Endothelial cell of umbilical vein (primary cell): ENCODE measurements at regions of chr1 and their contacts with region 1.

Region 1: DNA sequence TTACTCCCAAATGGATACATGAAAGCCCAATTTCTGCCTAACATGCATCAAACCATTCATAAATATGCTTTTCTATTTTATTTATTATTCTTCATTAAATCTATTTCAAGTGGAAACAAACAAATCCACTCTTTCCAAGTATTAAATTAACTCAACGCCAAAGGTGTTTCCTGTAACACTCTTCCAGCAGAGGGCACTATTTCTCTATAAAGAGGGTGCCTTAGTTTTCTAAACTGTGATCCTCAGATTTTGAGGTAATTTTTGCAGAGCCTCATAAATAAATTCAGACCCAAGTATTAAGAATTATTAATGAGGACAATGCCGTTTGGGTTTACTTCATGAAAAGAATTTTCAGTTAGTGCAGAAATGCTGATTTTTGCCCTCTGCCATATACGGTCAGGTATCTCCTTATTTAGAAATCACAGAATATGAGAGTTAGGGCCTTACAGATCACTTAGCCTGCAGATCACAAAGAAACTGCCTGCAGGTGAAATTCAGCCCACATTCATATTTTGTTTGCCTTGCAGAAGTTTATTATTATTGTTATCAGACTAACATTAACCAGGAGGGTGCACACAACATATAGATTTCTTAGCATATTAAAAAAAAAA is 40.1 kb upstream of the MYSM1 start:
- DNase-seq: peak; percentile 73
- H3K4me3 ChIP-seq: no peak overlapping the region
- H3K27ac ChIP-seq: no peak overlapping the region
- H3K4me1 ChIP-seq: peaks cover 3% of the 10 kb centered on the region
- H3K27me3 ChIP-seq: no peaks in the 10 kb centered on the region
- CTCF ChIP-seq: peak; percentile 31 to 38
- POLR2A ChIP-seq: no peak

Region 2: DNA sequence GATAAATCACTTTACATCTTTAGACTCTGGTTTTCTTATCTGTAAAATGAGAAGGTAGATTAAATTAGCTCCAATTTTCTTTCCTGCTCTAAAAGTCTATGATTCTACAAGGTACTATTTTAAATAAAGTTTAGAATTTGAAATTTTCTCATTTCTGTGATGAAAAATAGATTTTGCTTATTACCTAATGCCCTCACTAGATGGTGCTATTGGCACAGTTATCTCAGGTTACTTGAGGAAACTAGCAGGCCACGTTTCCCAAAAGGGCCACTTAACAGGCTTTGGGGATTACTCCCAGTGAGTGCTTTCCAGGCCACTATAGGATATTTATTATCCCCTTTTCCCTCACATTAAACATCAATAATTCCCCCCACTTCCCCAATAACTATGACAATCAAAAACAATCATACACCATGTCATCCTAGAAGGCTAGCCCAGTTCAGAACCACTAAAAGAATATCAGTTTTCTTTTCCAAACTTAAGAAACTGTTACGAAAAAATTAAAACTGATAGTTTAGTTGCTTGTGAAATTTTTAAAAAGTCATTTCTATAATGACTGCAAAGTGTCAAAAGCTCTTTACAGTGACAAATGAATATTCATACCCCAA is 224.1 kb before region 1 on chr1:
- CTCF ChIA-PET with region 1: interaction called, 3 read pairs
- POLR2A ChIA-PET with region 1: no interaction called
- dilution Hi-C with region 1: no loop called
- intact Hi-C with region 1: loop called (anchors 2 kb)
- DNase-seq: peak; percentile 71
- H3K4me3 ChIP-seq: no peak overlapping the region
- H3K27ac ChIP-seq: no peak overlapping the region
- H3K4me1 ChIP-seq: no peaks in the 10 kb centered on the region
- H3K27me3 ChIP-seq: no peaks in the 10 kb centered on the region
- CTCF ChIP-seq: peak; percentile 37 to 58
- POLR2A ChIP-seq: no peak

Region 3: DNA sequence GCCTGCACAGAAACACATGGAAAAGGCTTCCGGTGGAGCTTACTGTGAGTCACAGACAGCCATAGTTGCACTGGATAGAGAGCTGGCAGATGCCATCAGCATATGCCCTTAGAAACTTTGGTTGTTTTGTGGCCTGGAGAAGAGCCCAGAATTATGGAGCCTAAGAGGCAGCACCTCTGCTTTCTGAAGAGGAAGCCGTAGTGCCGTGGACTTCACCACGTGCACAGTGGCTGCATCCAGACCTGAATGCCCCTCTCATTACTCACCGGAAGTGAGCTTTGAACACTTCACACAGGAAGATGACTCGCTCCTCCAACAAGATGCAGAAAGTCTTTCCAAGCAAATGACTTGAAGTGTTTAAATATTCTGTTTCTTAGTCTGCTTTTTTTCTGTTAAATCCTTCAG is 15.5 kb after region 1 on chr1:
- CTCF ChIA-PET with region 1: interaction called, 11 read pairs
- POLR2A ChIA-PET with region 1: no interaction called
- dilution Hi-C with region 1: no loop called
- intact Hi-C with region 1: no loop called
- DNase-seq: peak; percentile 99
- H3K4me3 ChIP-seq: peak overlapping the region in 1 of 3 experiments; percentile 18
- H3K27ac ChIP-seq: peak overlapping the region; percentile 96
- H3K4me1 ChIP-seq: peaks cover 40% of the 10 kb centered on the region
- H3K27me3 ChIP-seq: no peaks in the 10 kb centered on the region
- CTCF ChIP-seq: no peak
- POLR2A ChIP-seq: no peak

Region 4: GRCh38 chr1:58848818-58849411 is 109.0 kb after region 1 on chr1:
- CTCF ChIA-PET with region 1: no interaction called
- POLR2A ChIA-PET with region 1: no interaction called
- dilution Hi-C with region 1: no loop called
- intact Hi-C with region 1: loop called (anchors 1 kb)
- DNase-seq: peak; percentile 95
- H3K4me3 ChIP-seq: no peak overlapping the region
- H3K27ac ChIP-seq: peak overlapping the region; percentile 95
- H3K4me1 ChIP-seq: peaks cover 30% of the 10 kb centered on the region
- H3K27me3 ChIP-seq: no peaks in the 10 kb centered on the region
- CTCF ChIP-seq: peak; percentile 8 to 24
- POLR2A ChIP-seq: no peak

Region 5: GRCh38 chr1:59076612-59077011 is 336.7 kb after region 1 on chr1:
- CTCF ChIA-PET with region 1: interaction called, 4 read pairs
- POLR2A ChIA-PET with region 1: no interaction called
- dilution Hi-C with region 1: no loop called
- intact Hi-C with region 1: loop called (anchors 2 kb)
- DNase-seq: peak; percentile 60
- H3K4me3 ChIP-seq: no peak overlapping the region
- H3K27ac ChIP-seq: no peak overlapping the region
- H3K4me1 ChIP-seq: peaks cover 13% of the 10 kb centered on the region
- H3K27me3 ChIP-seq: no peaks in the 10 kb centered on the region
- CTCF ChIP-seq: peak in 1 of 2 donors; percentile 16
- POLR2A ChIP-seq: no peak

Region 6: DNA sequence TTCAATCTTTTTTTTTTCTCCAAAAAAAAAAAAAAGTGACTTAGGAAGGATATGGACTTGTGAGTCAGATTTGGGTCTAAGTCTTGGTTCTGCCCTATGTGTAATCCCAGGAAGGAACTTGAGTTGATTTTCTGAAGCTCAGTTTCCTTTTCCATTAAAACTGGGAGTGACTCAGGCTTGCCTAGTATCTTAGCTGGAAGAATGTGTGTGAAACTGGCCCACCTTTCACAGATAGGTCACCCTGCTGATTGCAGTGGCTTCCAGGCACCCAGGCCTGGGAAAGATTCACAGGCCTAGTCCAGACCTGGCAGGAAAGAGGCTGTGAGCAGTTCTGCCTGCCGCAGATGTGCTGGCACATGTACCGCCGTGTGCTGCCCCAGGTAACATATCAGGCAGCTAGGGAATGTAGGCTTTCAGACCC is 856.5 kb after region 1 on chr1:
- CTCF ChIA-PET with region 1: no interaction called
- POLR2A ChIA-PET with region 1: no interaction called
- dilution Hi-C with region 1: no loop called
- intact Hi-C with region 1: no loop called
- DNase-seq: peak; percentile 98
- H3K4me3 ChIP-seq: no peak overlapping the region
- H3K27ac ChIP-seq: peak overlapping the region; percentile 83
- H3K4me1 ChIP-seq: peaks cover 29% of the 10 kb centered on the region
- H3K27me3 ChIP-seq: no peaks in the 10 kb centered on the region
- CTCF ChIP-seq: no peak
- POLR2A ChIP-seq: no peak